HEK293 (cell line): ENCODE measurements at regions of chr14 and their contacts with region 1.

Region 1: DNA sequence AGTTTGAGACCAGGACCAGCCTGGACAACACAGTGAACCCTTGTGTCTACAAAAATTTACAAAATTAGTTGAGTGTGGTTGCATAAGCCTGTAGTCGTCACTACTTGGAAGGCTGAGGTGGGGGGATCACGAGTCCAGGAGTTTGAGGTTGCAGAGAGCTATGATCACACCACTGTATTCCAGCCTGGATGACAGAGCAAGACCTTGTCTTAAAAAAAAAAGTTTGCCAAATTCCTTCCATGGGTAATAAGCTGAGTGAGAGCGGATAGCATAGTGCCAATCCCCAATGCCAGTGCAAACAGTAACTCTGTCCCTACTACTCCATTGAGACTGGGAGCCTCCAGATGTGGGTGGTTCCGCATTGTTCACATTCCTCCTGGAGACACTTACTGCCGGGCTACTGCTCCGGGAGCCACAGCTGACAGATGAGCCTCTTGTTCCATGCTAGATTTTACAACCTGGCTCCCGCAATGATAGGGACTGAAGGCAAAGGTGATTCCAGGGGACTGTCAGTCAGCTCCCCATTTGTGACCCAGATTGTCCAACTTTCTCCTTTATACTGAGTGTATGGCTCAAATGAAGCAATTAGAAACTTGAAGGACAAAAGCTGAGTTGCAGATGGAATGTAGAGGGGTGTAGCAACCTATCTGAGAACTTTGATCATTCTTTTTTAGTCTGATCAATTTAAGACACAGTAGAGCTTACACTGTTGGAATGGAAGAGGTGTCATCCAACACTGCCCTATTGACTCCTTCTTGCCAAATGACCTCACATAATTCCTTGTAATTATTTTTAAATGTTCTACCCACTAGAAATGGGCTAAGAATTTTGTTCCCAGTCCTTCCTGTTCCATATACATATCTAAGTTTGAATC is 13.4 kb upstream of the FRMD6 start:
- H3K4me3 ChIP-seq: no peak overlapping the region
- H3K27ac ChIP-seq: no peak overlapping the region
- H3K4me1 ChIP-seq: peaks cover 3% of the 10 kb centered on the region; the same call in 1 of the 2 replicates
- CTCF ChIP-seq: no peak

Region 2: DNA sequence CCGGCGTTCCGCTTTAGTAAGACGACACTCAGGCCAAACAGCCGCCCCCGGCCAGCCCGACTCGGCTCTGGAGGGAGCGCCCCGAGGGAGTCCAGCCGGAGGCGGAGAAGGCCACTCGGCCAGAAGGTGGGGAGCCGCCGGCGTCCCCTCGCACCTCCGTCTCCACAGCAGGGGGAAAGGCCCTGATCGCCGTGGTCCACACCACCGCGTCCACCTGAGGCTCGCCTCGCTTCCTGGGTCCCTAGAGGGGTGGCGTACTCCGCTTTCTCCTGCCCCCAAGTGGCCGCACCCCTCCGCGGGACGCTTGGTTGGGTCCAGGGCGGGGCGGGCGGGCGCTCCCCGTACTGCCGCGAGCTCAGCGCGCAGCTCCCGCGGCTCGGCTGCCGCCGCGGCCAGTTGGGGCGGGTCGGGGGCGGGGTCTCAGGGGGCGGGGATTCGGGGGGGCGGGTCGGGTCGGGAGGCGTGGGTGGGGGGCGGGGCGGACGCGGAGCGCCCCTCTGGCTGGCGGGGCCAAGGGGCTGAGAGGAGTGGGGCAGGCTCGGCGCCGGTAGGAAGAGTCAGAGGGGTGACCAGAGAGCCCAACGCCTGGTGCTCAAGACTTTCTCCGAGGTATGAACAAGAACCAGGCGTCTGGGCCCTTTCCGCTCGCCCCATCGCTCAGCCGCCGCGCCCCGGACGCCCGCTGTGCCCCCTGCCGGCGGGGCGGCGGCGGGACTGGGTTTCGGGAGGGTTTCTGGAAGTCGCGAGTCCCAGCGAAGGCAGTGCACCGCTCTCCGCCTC is 13.3 kb after region 1 on chr14 and contains the start of gene FRMD6:
- CTCF ChIA-PET with region 1: interaction called, 4 read pairs
- POLR2A ChIA-PET with region 1: interaction called, 10 read pairs
- H3K4me3 ChIP-seq: peak within 1 kb of the TSS; percentile 95
- H3K27ac ChIP-seq: peak within 1 kb of the TSS; percentile 98
- H3K4me1 ChIP-seq: peaks cover 27% of the 10 kb centered on the region
- CTCF ChIP-seq: peak; percentile 72